ENCODE measurements at regions of chr7 and their contacts with region 1.

Region 1: DNA sequence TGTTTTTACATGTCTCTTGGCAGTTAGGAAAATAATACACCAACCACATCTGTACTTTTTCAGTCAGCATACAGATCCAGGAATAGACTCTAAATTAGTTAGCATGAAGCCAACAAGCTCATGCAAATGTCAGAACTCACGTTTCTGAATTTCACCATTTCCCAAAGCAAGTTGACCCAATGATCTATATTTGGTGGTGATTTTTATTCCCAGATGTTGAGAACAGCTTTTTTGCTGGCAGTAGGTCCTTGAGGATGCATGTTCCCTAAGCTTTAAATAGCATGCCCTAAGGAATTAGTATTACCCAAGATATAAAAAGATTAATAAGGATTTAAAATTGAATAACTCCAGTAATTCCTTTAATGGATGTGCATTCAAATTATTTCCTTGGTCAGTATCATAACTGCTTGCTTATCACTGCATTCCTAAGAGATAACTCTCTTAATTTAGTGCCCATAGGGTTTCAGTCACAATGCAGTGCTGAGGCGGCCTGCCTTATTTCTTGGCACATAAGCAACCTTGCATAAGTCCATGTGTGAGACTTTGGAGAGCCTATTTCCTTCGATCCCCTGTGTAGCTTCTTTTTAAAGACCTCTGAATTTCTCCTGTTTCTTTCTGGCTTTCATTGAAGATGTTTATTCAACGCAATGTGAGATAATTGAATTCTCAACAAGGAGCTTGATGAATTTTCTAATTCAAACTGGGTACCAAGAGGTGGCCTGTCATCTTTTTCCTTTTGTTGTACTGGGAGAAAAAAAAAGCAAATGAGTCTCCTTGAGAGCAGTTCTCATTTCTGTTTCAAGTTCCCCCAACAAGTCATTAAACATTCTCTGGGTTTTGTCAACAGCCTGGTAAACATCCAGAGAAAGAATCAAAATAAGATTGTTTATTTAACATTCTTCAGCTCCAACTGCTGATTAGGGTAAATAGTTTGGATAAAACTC is 135.3 kb upstream of the MEOX2 start:
- DNase-seq: no peak

Region 2: GRCh38 chr7:15389073-15389472 is 432.7 kb before region 1 on chr7:
- intact Hi-C with region 1: no loop called
- DNase-seq: no peak

Region 3: GRCh38 chr7:15747301-15747700 is 74.5 kb before region 1 on chr7:
- intact Hi-C with region 1: loop called in 1 of 2 experiments (anchors 10 kb)
- DNase-seq: no peak

Measured in posterior vena cava (tissue), 2 donors.